ENCODE measurements at regions of chr19 and their contacts with region 1.

Region 1: DNA sequence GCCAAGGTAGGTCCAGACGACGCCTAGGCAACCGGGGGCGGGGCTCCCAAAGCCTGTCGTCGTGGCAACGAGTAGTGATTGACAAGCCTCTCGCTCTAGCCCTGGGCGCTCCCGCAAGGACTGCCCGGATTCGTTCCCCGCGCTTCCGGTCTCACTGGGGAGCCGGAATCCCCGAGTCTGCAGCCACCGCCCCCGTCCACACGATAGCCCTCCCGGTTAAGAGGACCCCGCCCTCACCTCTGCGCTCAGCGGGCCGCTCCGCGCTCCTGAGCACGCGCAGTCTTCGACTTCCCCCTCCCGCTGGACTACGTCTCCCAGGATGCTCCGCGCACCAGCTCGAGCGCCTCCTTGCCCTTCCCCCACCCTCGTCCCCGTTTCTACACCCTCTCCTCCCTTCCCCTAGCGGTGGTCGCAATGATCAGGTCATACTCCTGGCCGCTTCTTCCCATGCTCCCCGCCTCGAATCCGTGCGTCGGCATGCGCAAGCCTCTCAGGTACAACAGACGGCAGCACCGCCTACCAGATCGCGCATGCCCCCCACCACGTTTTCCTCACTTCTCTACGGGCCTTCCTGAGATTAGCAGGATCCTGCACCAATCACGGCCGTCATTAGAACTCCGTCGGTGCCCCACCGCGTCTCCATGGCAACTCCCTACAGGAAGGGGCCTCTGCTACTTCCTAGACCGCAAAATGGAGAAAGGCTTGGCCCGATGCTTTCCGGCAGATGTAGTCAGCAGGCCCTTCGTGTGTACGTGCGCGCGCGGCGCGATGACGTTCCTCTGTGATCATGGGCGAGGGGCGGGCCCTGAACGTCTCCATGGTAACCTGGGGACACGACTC is at the start of gene MZF1:
- DNase-seq: peak; percentile 100
- ATAC-seq: peak; percentile 78
- total RNA-seq, gene MZF1: 10.0 TPM

Region 2: GRCh38 chr19:58134244-58134643 is 438.8 kb before region 1 on chr19:
- intact Hi-C with region 1: no loop called
- DNase-seq: no peak
- ATAC-seq: no peak

Region 3: DNA sequence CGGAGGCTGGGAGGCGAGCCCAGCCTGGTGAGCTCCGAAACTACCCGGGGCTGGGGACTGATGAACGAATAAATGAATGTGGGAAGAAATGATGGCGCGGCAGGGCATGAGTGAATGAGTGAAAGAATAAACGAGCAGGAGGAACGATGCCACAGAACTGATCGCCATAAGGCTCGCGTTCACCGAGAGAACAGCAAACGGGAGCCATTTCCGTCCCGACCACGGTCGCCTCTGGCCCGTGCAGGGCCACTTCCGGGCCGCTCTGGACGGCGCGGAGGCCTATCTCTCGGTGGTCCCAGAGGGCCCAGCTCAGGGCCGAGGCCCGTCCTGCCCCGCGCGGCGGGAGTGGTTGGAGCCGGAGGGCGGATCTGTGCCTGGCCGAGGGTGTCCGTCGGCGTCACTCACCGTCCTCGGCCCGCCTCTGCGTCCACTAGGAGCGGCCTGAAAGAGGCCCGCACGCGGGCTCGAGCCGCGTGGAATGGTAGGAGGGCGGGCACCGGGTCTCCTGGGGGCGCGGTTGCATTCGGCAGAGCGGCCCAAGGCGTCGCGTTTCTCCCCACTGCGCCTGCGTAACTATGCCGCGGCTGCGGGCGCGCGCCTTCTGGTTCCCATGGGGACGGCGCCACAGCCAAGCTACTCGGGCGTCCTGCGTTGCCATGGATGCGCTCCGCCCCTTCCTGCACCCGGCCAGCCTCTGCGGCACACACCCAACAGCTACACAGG is 210.6 kb before region 1 on chr19 and contains the start of gene ZNF497:
- intact Hi-C with region 1: no loop called
- DNase-seq: peak; percentile 99
- ATAC-seq: peak; percentile 97
- total RNA-seq, gene ZNF497: 0.19 TPM

Region 4: DNA sequence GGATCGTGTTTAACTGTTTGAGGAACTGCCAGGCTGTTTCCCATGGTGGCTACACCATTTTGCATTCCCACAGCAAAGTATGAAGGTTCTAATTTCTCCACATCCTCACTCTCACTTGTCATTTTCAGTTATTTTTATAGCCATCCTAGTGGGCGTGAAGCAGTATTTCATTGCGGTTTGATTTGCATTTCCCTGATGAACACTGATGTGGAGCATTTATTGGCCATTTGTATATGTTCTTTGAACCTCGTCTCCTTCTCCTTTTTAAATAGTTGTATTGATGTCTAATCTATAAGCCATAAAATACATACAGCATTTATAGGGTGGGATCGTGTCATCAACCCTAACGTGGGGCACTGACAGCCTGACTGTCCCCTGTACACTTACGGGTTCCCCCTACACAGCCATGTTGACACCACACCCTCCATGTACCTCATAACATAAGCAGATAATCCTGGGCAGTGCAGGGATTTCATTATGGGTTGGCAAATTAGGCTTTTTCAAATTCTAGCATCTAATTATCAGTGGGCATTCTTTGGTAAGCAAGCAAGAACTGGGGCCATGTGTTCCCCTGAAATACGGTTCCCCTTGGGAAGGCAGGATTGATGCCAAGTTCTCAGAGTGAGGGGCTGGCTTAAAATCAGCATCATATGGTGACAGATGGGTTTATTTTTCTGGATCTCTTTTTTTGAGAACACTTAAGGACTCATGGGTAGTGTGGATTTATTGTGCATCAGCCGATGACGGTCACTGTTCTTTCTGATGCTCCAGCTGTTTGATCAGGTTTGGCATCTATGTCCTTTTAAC is 41.8 kb before region 1 on chr19:
- intact Hi-C with region 1: no loop called
- DNase-seq: no peak
- ATAC-seq: no peak

Region 5: GRCh38 chr19:58547323-58548312 is 25.4 kb before region 1 on chr19:
- intact Hi-C with region 1: no loop called
- DNase-seq: no peak
- ATAC-seq: no peak

Region 6: GRCh38 chr19:58558623-58559274 is 14.3 kb before region 1 on chr19:
- intact Hi-C with region 1: loop called (anchors 2 kb)
- DNase-seq: peak; percentile 99
- ATAC-seq: peak; percentile 84

Measured in Right ventricle myocardium inferior (tissue), 1 donor.